Sciatic nerve (tissue), 2 donors: ENCODE measurements at regions of chr6 and their contacts with region 1.

Region 1: DNA sequence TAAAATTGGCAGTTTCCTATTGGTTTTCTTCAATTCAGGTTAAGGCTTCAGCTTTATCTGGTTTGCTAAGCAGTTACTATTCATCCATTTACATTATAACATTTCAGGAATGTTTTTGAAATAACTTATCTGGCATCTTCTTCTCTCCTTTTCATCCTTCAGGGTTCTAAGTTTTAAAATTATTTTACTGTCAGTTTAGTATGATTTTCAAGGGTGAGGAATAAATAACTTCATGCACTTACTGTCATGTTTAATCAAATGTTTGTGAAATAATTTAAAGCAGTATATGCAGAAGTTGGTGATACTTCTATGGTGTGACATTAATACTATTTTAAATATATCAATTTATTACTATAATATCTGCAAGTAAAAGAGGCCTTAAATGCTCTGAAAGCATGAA is 338.1 kb upstream of the MMS22L start:
- DNase-seq: no peak
- ATAC-seq: no peak

Region 2: DNA sequence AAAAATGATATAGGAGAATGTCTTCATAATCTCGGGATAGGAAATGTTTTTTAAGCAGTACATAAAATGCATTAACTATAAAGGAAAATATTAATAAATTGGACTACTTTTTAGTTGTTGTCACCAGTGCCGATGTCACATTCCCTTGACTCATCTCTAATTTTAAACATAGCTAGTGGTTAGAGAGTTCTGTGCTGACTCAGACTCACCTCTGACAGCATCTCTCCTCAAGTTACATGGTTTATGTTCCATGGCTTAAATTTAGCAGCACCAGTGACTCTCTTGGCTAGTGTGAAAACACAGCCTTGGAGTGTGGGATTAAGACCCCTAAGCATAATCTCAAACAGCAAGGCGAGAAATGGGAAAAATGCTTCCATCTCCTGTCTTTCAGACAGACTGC is 26.3 kb before region 1 on chr6:
- intact Hi-C with region 1: loop called (anchors 2 kb)
- DNase-seq: no peak
- ATAC-seq: no peak